Posterior vena cava (tissue), 2 donors: ENCODE measurements at regions of chr18 and their contacts with region 1.

Region 1: GRCh38 chr18:63619661-63620060 is 24.4 kb downstream of the SERPINB4 start:
- DNase-seq: no peak

Region 2: GRCh38 chr18:63382843-63383242 is 236.8 kb before region 1 on chr18:
- intact Hi-C with region 1: loop called in 1 of 2 experiments (anchors 5 kb)
- DNase-seq: no peak

Region 3: GRCh38 chr18:63578357-63578958 is 41.2 kb before region 1 on chr18:
- intact Hi-C with region 1: no loop called
- DNase-seq: no peak